Activated CD8-positive, alpha-beta T cell treated with anti-CD3 and anti-CD28 coated beads, Interleukin-2, amount 10 ng/mL, durations not matched to agents 7 days and 5 days (primary cell): ENCODE measurements at regions of chr2 and their contacts with region 1.

Region 1: DNA sequence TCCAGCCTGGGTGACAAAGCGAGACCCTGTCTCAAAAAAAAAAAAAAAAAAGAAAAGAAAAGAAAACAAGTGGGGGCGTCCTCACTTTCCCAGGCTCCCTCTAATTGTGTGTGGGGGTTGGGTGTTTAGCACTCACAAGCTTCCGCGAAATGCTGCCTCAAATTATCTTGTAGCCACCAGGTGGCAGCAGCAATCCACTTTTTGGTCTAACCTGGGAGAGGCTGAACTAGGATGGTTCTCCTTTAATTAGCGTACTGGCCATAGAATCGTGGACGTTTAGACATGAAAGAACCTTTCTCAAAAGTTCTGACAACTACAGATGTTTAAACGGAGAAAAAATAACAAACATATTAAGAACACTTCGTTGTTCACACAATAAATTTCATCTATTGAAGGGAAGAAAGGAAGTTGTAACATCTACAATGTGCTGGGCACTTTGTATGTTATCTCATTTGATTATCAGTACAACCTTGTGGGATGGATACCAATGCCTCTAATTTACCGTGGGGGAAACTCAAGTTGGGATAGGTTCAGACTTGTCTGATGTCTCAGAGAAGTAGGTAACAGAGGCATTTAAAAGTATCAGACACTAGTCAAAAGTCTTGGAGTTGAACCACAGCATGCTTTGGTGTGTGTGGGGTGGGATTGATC is 122.7 kb upstream of the NABP1 start:
- DNase-seq: peak; percentile 87
- ATAC-seq: peak; percentile 88
- H3K4me3 Mint-ChIP-seq: no peak overlapping the region
- H3K27ac Mint-ChIP-seq: no peak overlapping the region
- H3K4me1 Mint-ChIP-seq: peaks cover 21% of the 10 kb centered on the region
- H3K27me3 Mint-ChIP-seq: peaks cover 28% of the 10 kb centered on the region

Region 2: DNA sequence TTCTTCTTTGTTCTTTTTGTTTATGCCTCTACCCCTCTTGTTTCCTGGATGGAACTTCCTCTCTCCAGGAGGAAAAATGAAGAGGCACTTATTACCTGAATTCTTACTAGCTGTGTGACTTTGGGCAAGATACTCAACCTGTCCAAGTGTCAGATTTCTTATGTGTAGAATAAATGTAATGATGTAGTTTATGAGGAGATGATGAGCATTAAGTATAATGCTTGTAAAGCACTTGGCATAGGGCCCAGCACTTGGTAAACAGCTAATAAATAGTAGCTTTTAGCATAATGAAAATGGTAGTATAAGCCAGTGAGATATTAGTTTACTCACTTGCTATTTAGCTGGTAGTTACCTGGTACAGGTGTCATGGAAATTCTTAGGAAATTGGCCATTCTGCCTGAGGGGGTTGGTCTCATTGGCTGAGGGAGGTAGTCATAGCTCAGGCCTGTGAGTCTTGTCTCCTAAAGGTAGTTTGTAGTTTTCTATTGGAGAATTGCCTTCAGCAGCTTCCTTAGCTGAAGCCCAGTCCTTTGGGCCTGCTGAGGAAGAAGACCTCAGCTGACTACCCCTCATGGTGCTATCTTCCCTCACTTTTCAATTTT is 10.7 kb before region 1 on chr2:
- CTCF ChIA-PET with region 1: interaction called, 12 read pairs
- POLR2A ChIA-PET with region 1: no interaction called
- DNase-seq: no peak
- ATAC-seq: no peak
- H3K4me3 Mint-ChIP-seq: no peak overlapping the region
- H3K27ac Mint-ChIP-seq: no peak overlapping the region
- H3K4me1 Mint-ChIP-seq: no peaks in the 10 kb centered on the region
- H3K27me3 Mint-ChIP-seq: peaks cover 12% of the 10 kb centered on the region

Region 3: GRCh38 chr2:191857259-191857805 is 302.1 kb after region 1 on chr2:
- CTCF ChIA-PET with region 1: no interaction called
- POLR2A ChIA-PET with region 1: no interaction called
- DNase-seq: no peak
- ATAC-seq: no peak
- H3K4me3 Mint-ChIP-seq: no peak overlapping the region
- H3K27ac Mint-ChIP-seq: no peak overlapping the region
- H3K4me1 Mint-ChIP-seq: no peaks in the 10 kb centered on the region
- H3K27me3 Mint-ChIP-seq: peaks cover 16% of the 10 kb centered on the region